ENCODE measurements at regions of chr4 and their contacts with region 1.

Region 1: DNA sequence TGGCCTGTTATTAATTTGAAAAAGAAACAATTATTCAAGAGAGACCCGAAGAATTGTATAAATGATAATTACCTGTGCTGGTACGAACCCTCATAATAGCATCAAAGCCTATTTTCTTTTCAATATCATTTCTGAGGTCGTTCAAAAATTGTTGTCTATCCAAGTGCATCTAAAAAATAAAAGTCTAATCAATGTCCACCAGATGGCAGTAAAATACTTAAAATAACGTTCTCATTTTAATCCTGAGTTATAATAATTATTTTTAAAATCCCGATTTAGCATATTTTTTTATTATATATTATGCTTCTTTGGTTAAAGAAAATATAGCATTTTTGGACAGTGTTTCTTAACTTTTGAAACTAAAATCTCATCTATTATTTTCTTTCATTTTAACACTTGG is 55.7 kb downstream of the METTL14 start:
- DNase-seq: no peak
- ATAC-seq: no peak
- H3K4me3 ChIP-seq: no peak overlapping the region
- H3K27ac ChIP-seq: no peak overlapping the region
- H3K4me1 ChIP-seq: peaks cover 17% of the 10 kb centered on the region
- H3K27me3 ChIP-seq: no peaks in the 10 kb centered on the region
- CTCF ChIP-seq: peak; percentile 42
- POLR2A ChIP-seq: no peak
- RAD21 ChIP-seq: peak; percentile 24

Region 2: GRCh38 chr4:118751629-118752323 is 10.9 kb after region 1 on chr4:
- CTCF ChIA-PET with region 1: no interaction called
- POLR2A ChIA-PET with region 1: no interaction called
- dilution Hi-C with region 1: no loop called
- in situ Hi-C with region 1: no loop called
- intact Hi-C with region 1: loop called (anchors 1 kb)
- DNase-seq: peak; percentile 55
- ATAC-seq: 0 out of 2 replicates have a peak, but pooled peaks have one; percentile 9
- H3K4me3 ChIP-seq: no peak overlapping the region
- H3K27ac ChIP-seq: peak overlapping the region; percentile 25; the same call in 1 of the 2 replicates
- H3K4me1 ChIP-seq: peaks cover 11% of the 10 kb centered on the region
- H3K27me3 ChIP-seq: no peaks in the 10 kb centered on the region
- CTCF ChIP-seq: no peak
- POLR2A ChIP-seq: no peak
- RAD21 ChIP-seq: no peak

Region 3: GRCh38 chr4:118974758-118975157 is 233.9 kb after region 1 on chr4:
- CTCF ChIA-PET with region 1: no interaction called
- POLR2A ChIA-PET with region 1: no interaction called
- dilution Hi-C with region 1: no loop called
- in situ Hi-C with region 1: loop called (anchors 10 kb)
- intact Hi-C with region 1: loop called (anchors 1 kb)
- DNase-seq: peak; percentile 63
- ATAC-seq: peak; percentile 66; the same call in 1 of the 2 replicates
- H3K4me3 ChIP-seq: no peak overlapping the region
- H3K27ac ChIP-seq: no peak overlapping the region
- H3K4me1 ChIP-seq: no peaks in the 10 kb centered on the region; the same call in 1 of the 2 replicates
- H3K27me3 ChIP-seq: no peaks in the 10 kb centered on the region
- CTCF ChIP-seq: no peak
- POLR2A ChIP-seq: no peak
- RAD21 ChIP-seq: no peak

Measured in IMR-90 (cell line).